ENCODE measurements at regions of chr15 and their contacts with region 1.

Region 1: GRCh38 chr15:34209421-34210282 is at the start of gene KATNBL1:
- DNase-seq: peak; percentile 97 to 98 (median 98)
- H3K4me3 ChIP-seq: peak within 1 kb of the TSS; percentile 56 to 82 (median 75)
- H3K27ac ChIP-seq: peak within 1 kb of the TSS; percentile 32 to 40
- H3K4me1 ChIP-seq: peaks cover 0 to 7% (median 0%) of the 10 kb centered on the region in 3 donors
- H3K27me3 ChIP-seq: no peaks in the 10 kb centered on the region
- CTCF ChIP-seq: peak; percentile 96
- total RNA-seq, gene KATNBL1: 32.2 TPM

Region 2: DNA sequence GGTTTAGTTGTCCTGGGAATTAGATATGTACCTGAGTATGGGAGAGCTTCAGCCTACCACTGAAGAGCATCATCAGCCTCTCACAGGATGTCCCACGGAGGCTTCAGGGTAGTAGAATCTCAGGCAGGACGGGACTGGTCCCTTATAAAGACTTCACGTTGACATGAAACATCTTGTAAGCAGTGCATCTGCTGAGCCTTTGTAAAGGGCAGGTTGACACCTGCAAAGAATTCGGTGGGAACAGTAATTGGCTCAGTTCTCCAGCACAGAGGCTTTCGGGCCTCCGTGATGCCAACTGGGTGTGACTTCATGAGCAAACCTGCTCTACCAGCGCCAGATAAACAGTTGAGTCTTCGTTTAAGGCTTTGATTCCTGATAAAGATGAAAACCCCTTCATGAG is 143.7 kb before region 1 on chr15:
- intact Hi-C with region 1: loop called (anchors 10 kb)
- DNase-seq: no peak
- H3K4me3 ChIP-seq: no peak overlapping the region
- H3K27ac ChIP-seq: no peak overlapping the region
- H3K4me1 ChIP-seq: no peaks in the 10 kb centered on the region
- H3K27me3 ChIP-seq: no peaks in the 10 kb centered on the region
- CTCF ChIP-seq: no peak

Region 3: DNA sequence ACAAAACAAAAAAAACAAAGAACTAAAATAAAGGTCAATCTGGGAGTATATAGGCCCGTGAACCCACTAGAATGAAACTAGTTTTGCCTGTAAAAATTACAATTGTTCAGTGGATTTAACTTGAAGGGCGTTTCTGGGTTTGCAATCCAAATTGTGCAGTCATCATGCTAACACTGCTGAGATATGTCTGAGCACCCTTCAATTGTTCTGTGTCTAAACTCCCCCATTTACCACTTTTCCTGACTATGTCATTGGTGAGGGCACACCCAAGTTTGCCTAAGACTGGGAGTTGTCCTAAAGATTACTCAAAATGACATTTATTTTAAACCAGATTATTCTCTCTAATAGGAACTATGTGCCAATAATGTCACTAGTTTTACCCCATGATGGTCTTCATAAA is 69.7 kb after region 1 on chr15:
- intact Hi-C with region 1: no loop called
- DNase-seq: no peak
- H3K4me3 ChIP-seq: no peak overlapping the region
- H3K27ac ChIP-seq: no peak overlapping the region
- H3K4me1 ChIP-seq: no peaks in the 10 kb centered on the region
- H3K27me3 ChIP-seq: no peaks in the 10 kb centered on the region
- CTCF ChIP-seq: no peak